ENCODE measurements at regions of chr14 and their contacts with region 1.

Region 1: GRCh38 chr14:68685419-68686204 is 107.3 kb downstream of the ZFP36L1 start:
- DNase-seq: peak; percentile 95
- ATAC-seq: peak; percentile 81
- H3K4me3 ChIP-seq: peak overlapping the region in 2 of 5 experiments; percentile 18 to 45
- H3K4me3 Mint-ChIP-seq: peak overlapping the region; percentile 82
- H3K27ac ChIP-seq: peak overlapping the region; percentile 94 to 98
- H3K27ac Mint-ChIP-seq: peak overlapping the region; percentile 99
- H3K4me1 ChIP-seq: peaks cover 70 to 83% of the 10 kb centered on the region in 2 donors
- H3K4me1 Mint-ChIP-seq: peaks cover 90% of the 10 kb centered on the region
- H3K27me3 ChIP-seq: no peaks in the 10 kb centered on the region
- H3K27me3 Mint-ChIP-seq: no peaks in the 10 kb centered on the region
- CTCF ChIP-seq: no peak

Region 2: GRCh38 chr14:68268197-68268596 is 417.4 kb before region 1 on chr14:
- CTCF ChIA-PET with region 1: interaction called, 3 read pairs
- POLR2A ChIA-PET with region 1: no interaction called
- intact Hi-C with region 1: loop called (anchors 5 kb)
- DNase-seq: peak; percentile 92
- ATAC-seq: peak; percentile 71
- H3K4me3 ChIP-seq: peak overlapping the region in 1 of 5 experiments; percentile 14
- H3K4me3 Mint-ChIP-seq: peak overlapping the region; percentile 72
- H3K27ac ChIP-seq: peak overlapping the region; percentile 78 to 94
- H3K27ac Mint-ChIP-seq: peak overlapping the region; percentile 95
- H3K4me1 ChIP-seq: peaks cover 78 to 89% of the 10 kb centered on the region in 2 donors
- H3K4me1 Mint-ChIP-seq: peaks cover 80% of the 10 kb centered on the region
- H3K27me3 ChIP-seq: no peaks in the 10 kb centered on the region
- H3K27me3 Mint-ChIP-seq: no peaks in the 10 kb centered on the region
- CTCF ChIP-seq: no peak

Region 3: GRCh38 chr14:68401855-68402254 is 283.8 kb before region 1 on chr14:
- CTCF ChIA-PET with region 1: interaction called, 7 read pairs
- POLR2A ChIA-PET with region 1: interaction called, 3 read pairs
- intact Hi-C with region 1: loop called (anchors 1 kb)
- DNase-seq: peak; percentile 71
- ATAC-seq: peak; percentile 59
- H3K4me3 ChIP-seq: peak overlapping the region in 1 of 5 experiments; percentile 57
- H3K4me3 Mint-ChIP-seq: peak overlapping the region; percentile 82
- H3K27ac ChIP-seq: peak overlapping the region; percentile 91 to 96
- H3K27ac Mint-ChIP-seq: peak overlapping the region; percentile 97
- H3K4me1 ChIP-seq: peaks cover 91 to 94% of the 10 kb centered on the region in 2 donors
- H3K4me1 Mint-ChIP-seq: peaks cover 90% of the 10 kb centered on the region
- H3K27me3 ChIP-seq: no peaks in the 10 kb centered on the region
- H3K27me3 Mint-ChIP-seq: no peaks in the 10 kb centered on the region
- CTCF ChIP-seq: no peak

Region 4: GRCh38 chr14:68506021-68506644 is 179.5 kb before region 1 on chr14:
- CTCF ChIA-PET with region 1: interaction called, 10 read pairs
- POLR2A ChIA-PET with region 1: interaction called, 8 read pairs
- intact Hi-C with region 1: loop called (anchors 10 kb)
- DNase-seq: no peak
- ATAC-seq: no peak
- H3K4me3 ChIP-seq: no peak overlapping the region
- H3K4me3 Mint-ChIP-seq: peak overlapping the region; percentile 40
- H3K27ac ChIP-seq: peak overlapping the region; percentile 79 to 88
- H3K27ac Mint-ChIP-seq: peak overlapping the region; percentile 89
- H3K4me1 ChIP-seq: peaks cover 73 to 86% of the 10 kb centered on the region in 2 donors
- H3K4me1 Mint-ChIP-seq: peaks cover 83% of the 10 kb centered on the region
- H3K27me3 ChIP-seq: no peaks in the 10 kb centered on the region
- H3K27me3 Mint-ChIP-seq: no peaks in the 10 kb centered on the region
- CTCF ChIP-seq: no peak

Region 5: DNA sequence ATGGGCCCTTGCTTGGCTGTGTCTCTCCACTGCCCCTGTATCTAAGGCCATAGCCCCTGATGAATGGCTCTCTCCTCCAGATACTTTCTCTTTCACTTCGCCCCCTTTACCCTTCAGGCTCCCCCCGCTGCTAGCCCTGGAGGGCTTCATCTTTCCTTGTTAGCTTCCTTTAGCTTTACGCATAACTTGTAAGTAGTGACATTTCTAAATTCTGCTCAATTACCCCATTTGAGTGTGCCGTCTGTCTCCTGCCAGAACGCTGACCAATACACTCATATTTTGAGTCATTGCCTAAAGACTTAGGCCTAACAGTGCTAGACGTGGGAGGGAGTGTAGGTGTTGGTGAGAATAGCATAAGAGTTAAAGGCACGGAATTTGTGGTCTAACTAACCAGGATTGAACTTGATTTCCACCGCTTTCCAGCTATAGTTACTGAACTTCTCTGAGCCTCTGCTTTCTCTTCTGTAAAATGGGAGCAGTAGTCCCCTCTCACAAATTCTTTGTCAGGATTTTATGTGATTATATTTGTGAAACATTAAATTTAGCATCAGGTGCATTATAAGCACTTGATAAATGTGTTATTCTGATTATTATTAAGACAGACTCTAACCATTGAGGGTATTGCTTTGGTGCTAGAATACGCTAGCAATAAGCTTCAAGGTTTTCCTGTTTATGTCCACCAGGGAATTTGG is 22.1 kb before region 1 on chr14:
- CTCF ChIA-PET with region 1: interaction called, 3 read pairs
- POLR2A ChIA-PET with region 1: interaction called, 5 read pairs
- intact Hi-C with region 1: loop called (anchors 2 kb)
- DNase-seq: peak; percentile 39
- ATAC-seq: peak; percentile 71
- H3K4me3 ChIP-seq: peak overlapping the region in 4 of 5 experiments; percentile 21 to 61 (median 36)
- H3K4me3 Mint-ChIP-seq: peak overlapping the region; percentile 95
- H3K27ac ChIP-seq: peak overlapping the region in 1 of 2 donors; percentile 14
- H3K27ac Mint-ChIP-seq: peak overlapping the region; percentile 96
- H3K4me1 ChIP-seq: peaks cover 6 to 11% of the 10 kb centered on the region in 2 donors
- H3K4me1 Mint-ChIP-seq: peaks cover 48% of the 10 kb centered on the region
- H3K27me3 ChIP-seq: no peaks in the 10 kb centered on the region
- H3K27me3 Mint-ChIP-seq: no peaks in the 10 kb centered on the region
- CTCF ChIP-seq: no peak

Region 6: GRCh38 chr14:68701001-68701741 is 15.6 kb after region 1 on chr14:
- CTCF ChIA-PET with region 1: no interaction called
- POLR2A ChIA-PET with region 1: no interaction called
- intact Hi-C with region 1: no loop called
- DNase-seq: no peak
- ATAC-seq: no peak
- H3K4me3 ChIP-seq: no peak overlapping the region
- H3K4me3 Mint-ChIP-seq: no peak overlapping the region
- H3K27ac ChIP-seq: no peak overlapping the region
- H3K27ac Mint-ChIP-seq: peak overlapping the region; percentile 67
- H3K4me1 ChIP-seq: peaks cover 0 to 8% of the 10 kb centered on the region in 2 donors
- H3K4me1 Mint-ChIP-seq: peaks cover 10% of the 10 kb centered on the region
- H3K27me3 ChIP-seq: no peaks in the 10 kb centered on the region
- H3K27me3 Mint-ChIP-seq: no peaks in the 10 kb centered on the region
- CTCF ChIP-seq: no peak

Region 7: GRCh38 chr14:68741839-68742470 is 56.3 kb after region 1 on chr14:
- CTCF ChIA-PET with region 1: no interaction called
- POLR2A ChIA-PET with region 1: interaction called, 3 read pairs
- intact Hi-C with region 1: loop called (anchors 1 kb)
- DNase-seq: peak; percentile 92
- ATAC-seq: peak; percentile 92
- H3K4me3 ChIP-seq: no peak overlapping the region
- H3K4me3 Mint-ChIP-seq: peak overlapping the region; percentile 56
- H3K27ac ChIP-seq: peak overlapping the region; percentile 42 to 44
- H3K27ac Mint-ChIP-seq: peak overlapping the region; percentile 88
- H3K4me1 ChIP-seq: peaks cover 34 to 52% of the 10 kb centered on the region in 2 donors
- H3K4me1 Mint-ChIP-seq: peaks cover 55% of the 10 kb centered on the region
- H3K27me3 ChIP-seq: no peaks in the 10 kb centered on the region
- H3K27me3 Mint-ChIP-seq: no peaks in the 10 kb centered on the region
- CTCF ChIP-seq: no peak

Region 8: GRCh38 chr14:68766299-68767230 is 81.0 kb after region 1 on chr14:
- CTCF ChIA-PET with region 1: no interaction called
- POLR2A ChIA-PET with region 1: no interaction called
- intact Hi-C with region 1: no loop called
- DNase-seq: no peak
- ATAC-seq: no peak
- H3K4me3 ChIP-seq: no peak overlapping the region
- H3K4me3 Mint-ChIP-seq: no peak overlapping the region
- H3K27ac ChIP-seq: no peak overlapping the region
- H3K27ac Mint-ChIP-seq: no peak overlapping the region
- H3K4me1 ChIP-seq: peaks cover 3 to 6% of the 10 kb centered on the region in 2 donors
- H3K4me1 Mint-ChIP-seq: peaks cover 4% of the 10 kb centered on the region
- H3K27me3 ChIP-seq: no peaks in the 10 kb centered on the region
- H3K27me3 Mint-ChIP-seq: no peaks in the 10 kb centered on the region
- CTCF ChIP-seq: no peak

Region 9: DNA sequence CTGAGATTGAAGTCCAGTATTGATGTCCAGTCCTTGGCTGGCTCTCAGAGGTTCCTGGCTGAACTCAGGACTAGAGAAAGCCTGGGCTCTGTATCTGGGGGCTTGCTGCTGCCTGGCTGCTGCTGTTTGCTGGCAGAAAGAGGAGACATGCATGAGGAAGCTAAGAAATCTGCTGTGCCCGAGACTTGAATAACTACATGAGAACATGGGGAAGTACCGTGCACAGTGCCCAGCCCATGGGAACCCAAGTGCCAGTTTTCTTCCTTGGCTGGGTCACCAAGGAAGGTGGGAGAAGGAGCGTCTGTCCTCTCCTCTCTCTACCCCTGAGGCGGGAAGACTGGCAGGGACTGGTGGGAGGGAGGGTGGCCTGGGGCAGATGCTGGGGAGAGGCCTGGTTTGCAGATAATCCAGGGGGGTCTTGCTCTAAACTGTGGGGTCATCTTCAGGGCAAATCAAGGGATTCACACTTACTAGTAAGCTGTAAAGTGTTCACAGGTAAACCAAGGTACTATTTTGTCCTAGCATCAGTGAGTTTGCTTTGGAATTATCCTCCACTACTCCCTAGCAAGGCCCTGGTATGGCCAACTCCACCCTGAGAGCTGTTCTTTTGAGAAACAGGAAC is 121.0 kb after region 1 on chr14:
- CTCF ChIA-PET with region 1: no interaction called
- POLR2A ChIA-PET with region 1: no interaction called
- intact Hi-C with region 1: no loop called
- DNase-seq: peak; percentile 88
- ATAC-seq: peak; percentile 93
- H3K4me3 ChIP-seq: peak overlapping the region in 3 of 5 experiments; percentile 33 to 54 (median 40)
- H3K4me3 Mint-ChIP-seq: peak overlapping the region; percentile 74
- H3K27ac ChIP-seq: peak overlapping the region; percentile 95
- H3K27ac Mint-ChIP-seq: peak overlapping the region; percentile 99
- H3K4me1 ChIP-seq: peaks cover 60 to 68% of the 10 kb centered on the region in 2 donors
- H3K4me1 Mint-ChIP-seq: peaks cover 83% of the 10 kb centered on the region
- H3K27me3 ChIP-seq: no peaks in the 10 kb centered on the region
- H3K27me3 Mint-ChIP-seq: no peaks in the 10 kb centered on the region
- CTCF ChIP-seq: no peak

Measured in B cell (primary cell).